ENCODE measurements at regions of chr18 and their contacts with region 1.

Region 1: GRCh38 chr18:32092422-32093101 is 888 bp downstream of the RNF138 start:
- DNase-seq: peak; percentile 90
- H3K4me3 ChIP-seq: peak overlapping the region; percentile 75 to 96 (median 83)
- H3K27ac ChIP-seq: peak overlapping the region; percentile 99 to 100 (median 100)
- H3K4me1 ChIP-seq: peaks cover 5 to 53% (median 20%) of the 10 kb centered on the region in 3 donors
- H3K27me3 ChIP-seq: no peaks in the 10 kb centered on the region
- CTCF ChIP-seq: no peak
- POLR2A ChIP-seq: peak in 3 of 4 donors; percentile 26 to 62 (median 58)

Region 2: GRCh38 chr18:31892936-31893335 is 199.6 kb before region 1 on chr18:
- intact Hi-C with region 1: no loop called
- DNase-seq: no peak
- H3K4me3 ChIP-seq: no peak overlapping the region
- H3K27ac ChIP-seq: no peak overlapping the region
- H3K4me1 ChIP-seq: no peaks in the 10 kb centered on the region
- H3K27me3 ChIP-seq: no peaks in the 10 kb centered on the region
- CTCF ChIP-seq: no peak
- POLR2A ChIP-seq: no peak

Region 3: GRCh38 chr18:31942999-31943865 is 149.3 kb before region 1 on chr18 and contains the start of gene TRAPPC8:
- intact Hi-C with region 1: loop called (anchors 10 kb)
- DNase-seq: peak; percentile 97
- H3K4me3 ChIP-seq: peak within 1 kb of the TSS; percentile 72 to 88 (median 82)
- H3K27ac ChIP-seq: peak within 1 kb of the TSS; percentile 94 to 97 (median 96)
- H3K4me1 ChIP-seq: peaks cover 14 to 45% (median 19%) of the 10 kb centered on the region in 3 donors
- H3K27me3 ChIP-seq: no peaks in the 10 kb centered on the region
- CTCF ChIP-seq: peak in 3 of 6 experiments; percentile 6 to 14 (median 7)
- POLR2A ChIP-seq: peak in 3 of 4 donors; percentile 21 to 60 (median 34)
- total RNA-seq, gene TRAPPC8: 15.5 to 38.1 (median 31.2) TPM

Region 4: DNA sequence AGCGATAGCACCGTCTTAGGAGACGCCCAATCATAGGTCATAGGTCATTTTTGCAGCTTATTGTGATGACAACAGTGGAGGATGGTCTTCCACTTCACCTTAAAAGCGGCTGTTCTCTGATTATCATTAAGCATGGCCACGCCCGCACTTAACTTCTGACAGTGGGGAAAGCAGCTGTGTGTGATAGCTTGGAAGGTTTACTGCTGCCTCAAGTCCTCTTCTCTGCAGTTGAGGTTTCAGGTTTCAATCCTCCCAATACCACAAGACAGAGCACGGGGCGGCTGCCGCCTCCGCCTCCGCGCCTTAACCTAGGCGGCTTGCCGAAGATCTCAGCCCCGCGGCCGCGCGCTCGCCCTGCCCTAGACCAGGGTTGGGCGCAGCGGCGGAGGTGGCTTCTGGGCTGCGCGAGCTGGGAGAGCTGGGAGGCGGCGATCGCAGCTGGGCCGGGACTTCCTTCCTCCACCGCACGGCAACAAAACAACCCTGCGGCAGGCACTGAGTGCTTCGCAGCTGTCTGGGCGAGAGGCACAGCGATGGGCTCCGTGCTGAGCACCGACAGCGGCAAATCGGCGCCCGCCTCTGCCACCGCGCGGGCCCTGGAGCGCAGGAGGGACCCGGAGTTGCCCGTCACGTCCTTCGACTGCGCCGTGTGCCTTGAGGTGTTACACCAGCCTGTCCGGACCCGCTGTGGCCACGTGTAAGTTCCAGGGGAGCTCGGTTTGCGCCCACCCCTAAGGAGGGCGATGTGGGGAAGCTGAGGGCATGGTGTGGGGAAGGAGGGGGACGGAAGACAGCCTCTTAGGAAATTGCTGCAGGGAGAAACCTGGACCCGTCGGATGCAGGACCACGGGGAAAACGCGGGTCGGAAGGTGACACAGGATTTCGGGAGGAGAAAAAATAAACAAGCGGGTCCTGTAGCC is 74.0 kb before region 1 on chr18 and contains the start of gene RNF125:
- intact Hi-C with region 1: loop called (anchors 5 kb)
- DNase-seq: peak; percentile 39
- H3K4me3 ChIP-seq: peak within 1 kb of the TSS; percentile 51 to 84 (median 70)
- H3K27ac ChIP-seq: peak within 1 kb of the TSS; percentile 85 to 92 (median 87)
- H3K4me1 ChIP-seq: peaks cover 0 to 61% (median 0%) of the 10 kb centered on the region in 3 donors
- H3K27me3 ChIP-seq: peaks cover 0 to 10% (median 0%) of the 10 kb centered on the region in 4 donors
- CTCF ChIP-seq: peak in 2 of 6 experiments; percentile 22 to 23
- POLR2A ChIP-seq: peak in 2 of 4 donors; percentile 48 to 67
- total RNA-seq, gene RNF125: 0.87 to 10.7 (median 3.2) TPM

Measured in esophagus squamous epithelium (tissue), 5 donors.